ENCODE measurements at regions of chr15 and their contacts with region 1.

Region 1: GRCh38 chr15:74776821-74777768 is 4.8 kb upstream of the CSK start:
- DNase-seq: no peak
- H3K4me3 ChIP-seq: no peak overlapping the region
- H3K27ac ChIP-seq: no peak overlapping the region
- H3K4me1 ChIP-seq: peaks cover 15% of the 10 kb centered on the region
- H3K27me3 ChIP-seq: no peaks in the 10 kb centered on the region
- CTCF ChIP-seq: no peak

Region 2: DNA sequence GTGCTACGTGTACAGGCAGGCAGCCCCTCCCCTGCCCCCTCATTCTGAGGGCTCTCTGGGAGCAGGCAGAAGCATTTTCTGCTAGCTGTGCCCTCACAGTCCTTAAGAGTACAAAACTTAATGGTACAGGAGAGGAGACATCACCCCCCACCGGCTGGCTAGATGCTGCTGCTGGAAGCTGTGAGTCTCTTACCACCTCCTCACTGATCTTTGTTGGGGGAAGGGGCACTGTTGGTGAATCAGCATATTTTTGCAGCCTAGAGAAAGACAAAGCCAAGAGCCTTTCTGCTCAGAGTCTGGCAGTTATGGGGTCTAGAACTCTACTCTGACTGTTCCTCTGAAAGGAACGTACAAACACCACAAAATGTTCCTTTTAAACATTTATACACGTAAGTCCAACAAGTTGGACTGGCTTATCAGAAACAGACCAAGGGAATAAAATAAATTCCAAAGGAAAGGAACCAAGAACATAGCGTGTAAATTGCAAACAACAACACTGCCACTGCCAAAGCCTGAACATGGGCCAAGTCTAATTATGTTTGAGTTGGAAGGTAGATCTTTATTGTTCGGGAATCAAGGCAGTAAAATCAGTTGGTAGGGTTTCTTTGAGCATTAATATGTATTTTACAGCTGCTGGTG is 134.2 kb before region 1 on chr15:
- dilution Hi-C with region 1: loop called (anchors 10 kb)
- DNase-seq: no peak
- H3K4me3 ChIP-seq: no peak overlapping the region
- H3K27ac ChIP-seq: no peak overlapping the region
- H3K4me1 ChIP-seq: peaks cover 17% of the 10 kb centered on the region
- H3K27me3 ChIP-seq: no peaks in the 10 kb centered on the region
- CTCF ChIP-seq: no peak

Measured in keratinocyte (primary cell).